H1 (cell line): ENCODE measurements at regions of chr13 and their contacts with region 1.

Region 1: DNA sequence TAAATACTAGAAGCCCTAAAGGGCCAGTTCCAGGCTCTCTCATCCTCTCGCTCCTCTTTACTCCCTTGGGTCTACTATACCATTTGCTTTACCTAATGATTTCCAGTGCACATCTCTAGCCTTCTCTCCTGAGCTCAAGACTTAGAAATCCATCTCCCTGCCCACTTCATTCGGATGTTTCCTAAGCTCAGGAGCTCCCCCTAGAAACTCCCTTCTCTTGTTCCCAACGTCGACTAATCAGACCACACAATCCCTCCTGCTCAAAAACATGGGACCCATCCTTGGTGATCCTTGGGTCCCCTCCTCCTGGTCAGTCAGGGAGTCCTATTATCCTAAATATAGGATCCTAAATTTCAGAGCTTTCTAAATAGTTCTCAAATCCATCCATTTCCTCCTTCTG is 21.1 kb upstream of the STK24 start:
- DNase-seq: no peak
- H3K4me3 ChIP-seq: no peak overlapping the region
- H3K27ac ChIP-seq: no peak overlapping the region
- H3K4me1 ChIP-seq: no peaks in the 10 kb centered on the region
- H3K27me3 ChIP-seq: no peaks in the 10 kb centered on the region; a peak in 1 of 7 replicates
- CTCF ChIP-seq: peak in 2 of 3 experiments; percentile 41 to 57; a peak in 2 of 4 replicates
- EP300 ChIP-seq: no peak
- POLR2A ChIP-seq: no peak
- RAD21 ChIP-seq: peak; percentile 42 to 66

Region 2: DNA sequence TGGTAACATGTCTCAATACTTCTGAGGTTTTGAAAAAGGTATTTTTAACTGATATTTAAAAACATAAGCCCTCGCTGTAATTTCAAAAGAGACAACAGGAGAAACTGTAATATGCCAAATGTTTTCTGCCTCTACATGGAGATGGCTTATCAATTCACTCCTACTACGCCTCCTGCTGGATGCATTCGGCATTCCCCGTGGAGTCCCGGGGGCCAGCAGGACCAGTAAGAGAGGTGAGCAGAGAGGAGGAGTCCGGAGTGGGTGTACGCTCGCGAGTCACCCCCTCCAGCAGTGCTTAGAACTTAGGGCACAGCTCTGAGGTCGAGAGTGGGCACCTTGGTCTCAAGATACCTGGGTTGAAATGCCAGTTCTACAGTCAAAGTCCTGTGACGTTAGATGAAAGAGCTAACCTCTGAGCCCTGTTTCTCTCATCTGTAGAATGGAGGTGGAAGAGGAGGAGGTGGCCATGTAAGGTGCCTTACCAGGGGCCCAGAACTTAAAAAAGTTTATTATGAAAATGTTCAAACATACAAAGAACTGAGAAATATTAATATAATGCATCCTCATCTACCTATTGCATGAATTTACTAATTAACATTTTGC is 131.3 kb before region 1 on chr13:
- CTCF ChIA-PET with region 1: interaction called, 10 read pairs
- POLR2A ChIA-PET with region 1: no interaction called
- DNase-seq: peak in 1 of 2 experiments; percentile 94
- H3K4me3 ChIP-seq: no peak overlapping the region
- H3K27ac ChIP-seq: no peak overlapping the region
- H3K4me1 ChIP-seq: peaks cover 0 to 3% (median 1%) of the 10 kb centered on the region in 4 experiments; a peak in 2 of 7 replicates
- H3K27me3 ChIP-seq: no peaks in the 10 kb centered on the region
- CTCF ChIP-seq: peak; percentile 75 to 89 (median 87)
- EP300 ChIP-seq: no peak
- POLR2A ChIP-seq: no peak
- RAD21 ChIP-seq: peak; percentile 65 to 73

Region 3: DNA sequence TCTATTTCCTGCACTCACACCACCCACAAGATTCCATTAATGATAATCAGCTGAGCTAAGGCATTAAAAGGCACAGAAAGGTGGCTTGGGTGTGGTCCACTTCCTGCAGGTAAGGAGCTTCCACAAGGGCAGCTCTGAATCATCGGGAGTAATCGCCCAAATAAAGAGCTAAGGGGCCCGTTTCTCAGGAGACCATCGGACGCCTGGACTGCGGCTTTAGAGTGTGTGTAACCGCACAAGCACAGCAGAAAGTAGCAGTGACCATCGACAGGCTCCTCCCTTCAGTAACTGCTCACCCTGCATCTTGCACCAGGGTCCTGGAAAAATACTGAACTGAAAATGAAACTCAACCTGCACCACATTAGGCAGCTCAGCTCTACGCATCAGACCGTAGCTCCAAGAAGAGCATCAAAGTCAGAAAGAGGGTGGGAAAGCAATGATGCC is 27.1 kb before region 1 on chr13:
- CTCF ChIA-PET with region 1: interaction called, 12 read pairs
- POLR2A ChIA-PET with region 1: no interaction called
- DNase-seq: no peak
- H3K4me3 ChIP-seq: no peak overlapping the region
- H3K27ac ChIP-seq: no peak overlapping the region
- H3K4me1 ChIP-seq: peaks cover 6 to 34% (median 22%) of the 10 kb centered on the region in 4 experiments
- H3K27me3 ChIP-seq: no peaks in the 10 kb centered on the region
- CTCF ChIP-seq: no peak
- EP300 ChIP-seq: no peak
- POLR2A ChIP-seq: no peak
- RAD21 ChIP-seq: no peak

Region 4: DNA sequence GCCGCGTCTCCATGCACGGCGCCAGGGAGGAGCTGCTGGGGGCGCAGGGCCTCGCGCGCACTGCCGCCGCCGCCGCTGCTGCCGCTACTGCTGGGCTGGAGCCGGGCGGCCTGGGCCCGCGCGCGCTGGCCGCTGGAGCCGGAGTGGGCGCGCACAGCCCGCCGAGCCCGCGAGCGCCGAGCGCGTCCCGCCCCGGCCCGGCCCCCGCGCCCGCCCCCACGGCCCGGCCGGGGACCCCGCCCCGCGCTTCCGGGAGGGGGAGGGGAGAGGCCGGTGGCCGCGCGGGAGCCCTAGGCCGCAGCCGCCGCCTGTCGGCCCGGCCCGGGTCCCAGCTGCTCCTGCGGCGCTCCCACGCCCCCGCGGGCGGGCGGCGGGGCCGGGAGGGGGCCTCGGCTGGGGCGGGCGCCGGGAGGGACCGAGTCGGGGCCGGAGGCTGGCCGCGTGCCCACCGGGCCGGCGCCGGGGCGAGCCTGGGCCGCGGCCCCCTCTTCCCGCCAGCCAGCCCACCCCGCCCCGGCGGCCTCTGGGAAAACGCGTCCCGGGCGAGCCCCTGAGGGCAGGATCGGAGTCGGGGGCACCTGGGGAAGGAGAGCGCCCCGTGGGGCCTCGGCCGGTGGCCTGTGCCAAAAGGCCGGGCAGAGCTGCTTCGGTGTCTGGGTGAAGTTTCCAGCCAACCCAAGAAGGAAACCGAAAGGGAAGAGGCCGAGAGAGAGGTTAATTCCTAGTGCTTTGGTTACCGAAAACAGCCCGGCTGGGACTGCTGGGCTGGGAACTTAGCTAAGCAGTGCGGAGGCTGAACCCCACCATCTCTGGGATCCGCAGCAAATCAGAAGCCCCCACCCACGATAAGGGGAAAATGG is 20.9 kb before region 1 on chr13 and contains the start of gene STK24:
- CTCF ChIA-PET with region 1: interaction called, 12 read pairs
- POLR2A ChIA-PET with region 1: interaction called, 4 read pairs
- DNase-seq: peak in 1 of 2 experiments; percentile 75
- H3K4me3 ChIP-seq: peak within 1 kb of the TSS; percentile 59 to 90 (median 83)
- H3K27ac ChIP-seq: peak within 1 kb of the TSS; percentile 83
- H3K4me1 ChIP-seq: peaks cover 2 to 19% (median 5%) of the 10 kb centered on the region in 4 experiments
- H3K27me3 ChIP-seq: no peaks in the 10 kb centered on the region
- CTCF ChIP-seq: no peak
- EP300 ChIP-seq: no peak
- POLR2A ChIP-seq: peak in 1 of 2 experiments; percentile 70; a peak in 1 of 3 replicates
- RAD21 ChIP-seq: no peak
- total RNA-seq, gene STK24: 142 and 143 TPM in 2 replicates

Region 5: GRCh38 chr13:98584668-98585391 is 13.2 kb before region 1 on chr13:
- CTCF ChIA-PET with region 1: interaction called, 37 read pairs
- POLR2A ChIA-PET with region 1: interaction called, 4 read pairs
- DNase-seq: no peak
- H3K4me3 ChIP-seq: no peak overlapping the region
- H3K27ac ChIP-seq: no peak overlapping the region
- H3K4me1 ChIP-seq: peaks cover 0 to 2% (median 1%) of the 10 kb centered on the region in 4 experiments; a peak in 1 of 7 replicates
- H3K27me3 ChIP-seq: no peaks in the 10 kb centered on the region
- CTCF ChIP-seq: no peak
- EP300 ChIP-seq: no peak
- POLR2A ChIP-seq: no peak
- RAD21 ChIP-seq: no peak

Region 6: DNA sequence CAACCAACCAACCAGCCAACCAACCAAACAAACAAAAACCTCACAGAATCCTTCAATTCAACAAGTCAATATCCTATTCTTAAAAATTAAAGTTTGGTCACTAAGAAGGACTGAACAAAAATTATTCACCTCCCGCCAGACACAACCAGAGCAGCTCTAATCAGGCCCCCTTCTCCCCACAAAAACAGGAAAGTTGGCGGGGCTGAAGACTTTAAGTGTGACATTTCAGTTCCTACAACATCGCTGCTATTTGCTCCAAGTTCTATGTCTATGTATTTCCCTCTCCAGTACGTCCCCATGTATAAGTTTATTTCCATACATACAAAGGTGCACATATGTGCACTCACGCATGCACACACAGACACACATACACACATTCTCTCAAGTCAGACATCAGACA is 11.7 kb after region 1 on chr13:
- CTCF ChIA-PET with region 1: interaction called, 11 read pairs
- POLR2A ChIA-PET with region 1: no interaction called
- DNase-seq: no peak
- H3K4me3 ChIP-seq: no peak overlapping the region
- H3K27ac ChIP-seq: no peak overlapping the region
- H3K4me1 ChIP-seq: no peaks in the 10 kb centered on the region
- H3K27me3 ChIP-seq: no peaks in the 10 kb centered on the region
- CTCF ChIP-seq: no peak
- EP300 ChIP-seq: no peak
- POLR2A ChIP-seq: no peak
- RAD21 ChIP-seq: no peak

Region 7: DNA sequence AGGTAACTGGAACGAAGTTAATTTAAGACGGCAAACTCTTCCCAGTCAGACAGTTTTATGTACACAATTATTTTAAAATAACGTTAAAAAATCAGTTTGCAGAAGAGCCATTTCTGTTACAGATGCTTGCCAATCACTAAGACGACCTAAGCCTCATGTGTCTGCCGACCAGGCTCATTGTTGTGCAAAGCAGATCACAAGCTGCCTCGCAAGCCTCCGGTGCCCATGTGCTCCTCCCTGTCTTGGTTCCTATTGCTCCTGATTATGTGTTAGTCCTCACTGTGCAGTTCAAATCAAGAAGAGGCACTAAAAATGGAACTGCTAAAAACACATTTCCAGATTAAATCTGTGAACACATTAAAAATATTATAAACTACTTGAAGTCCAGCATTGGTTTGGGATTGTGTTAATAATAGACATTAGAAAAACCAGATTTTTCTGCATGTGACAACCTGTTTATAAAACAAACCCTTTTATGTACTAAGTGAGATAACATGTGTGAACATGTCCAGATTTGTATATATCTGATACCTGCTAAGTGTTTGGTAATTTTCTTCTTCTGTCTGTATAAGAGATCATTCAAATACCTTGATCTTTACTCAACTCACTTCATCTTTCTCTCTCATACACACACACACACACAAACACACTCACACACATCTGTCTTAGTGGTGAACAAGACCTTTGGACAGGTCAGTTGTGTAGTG is 236.4 kb after region 1 on chr13:
- CTCF ChIA-PET with region 1: no interaction called
- POLR2A ChIA-PET with region 1: no interaction called
- DNase-seq: no peak
- H3K4me3 ChIP-seq: no peak overlapping the region
- H3K27ac ChIP-seq: no peak overlapping the region
- H3K4me1 ChIP-seq: peaks cover 0 to 11% (median 1%) of the 10 kb centered on the region in 4 experiments; a peak in 4 of 7 replicates
- H3K27me3 ChIP-seq: no peaks in the 10 kb centered on the region
- CTCF ChIP-seq: no peak
- EP300 ChIP-seq: no peak
- POLR2A ChIP-seq: no peak
- RAD21 ChIP-seq: no peak